Common myeloid progenitor, CD34-positive (primary cell): ENCODE measurements at regions of chrX and their contacts with region 1.

Region 1: GRCh38 chrX:41084893-41085511 is at the start of gene USP9X:
- DNase-seq: peak; percentile 86 to 93 (median 92)
- H3K4me3 ChIP-seq: peak within 1 kb of the TSS; percentile 78 to 94 (median 89)
- H3K27ac ChIP-seq: peak within 1 kb of the TSS; percentile 98 to 99
- H3K4me1 ChIP-seq: peaks cover 12 to 36% (median 27%) of the 10 kb centered on the region in 4 experiments
- H3K27me3 ChIP-seq: peaks cover 0 to 30% (median 0%) of the 10 kb centered on the region in 5 experiments

Region 2: GRCh38 chrX:40646489-40647306 is 438.3 kb before region 1 on chrX:
- CTCF ChIA-PET with region 1: no interaction called
- POLR2A ChIA-PET with region 1: interaction called, 12 read pairs
- DNase-seq: peak in 2 of 3 donors; percentile 40 to 59
- H3K4me3 ChIP-seq: peak overlapping the region; percentile 52 to 88 (median 76)
- H3K27ac ChIP-seq: peak overlapping the region; percentile 30 to 66
- H3K4me1 ChIP-seq: peaks cover 0 to 40% (median 33%) of the 10 kb centered on the region in 4 experiments
- H3K27me3 ChIP-seq: peaks cover 0 to 12% (median 0%) of the 10 kb centered on the region in 5 experiments

Region 3: GRCh38 chrX:41003506-41004270 is 81.3 kb before region 1 on chrX:
- CTCF ChIA-PET with region 1: no interaction called
- POLR2A ChIA-PET with region 1: no interaction called
- DNase-seq: no peak
- H3K4me3 ChIP-seq: no peak overlapping the region
- H3K27ac ChIP-seq: no peak overlapping the region
- H3K4me1 ChIP-seq: peaks cover 0 to 5% (median 2%) of the 10 kb centered on the region in 4 experiments
- H3K27me3 ChIP-seq: peaks cover 0 to 5% (median 0%) of the 10 kb centered on the region in 5 experiments

Region 4: DNA sequence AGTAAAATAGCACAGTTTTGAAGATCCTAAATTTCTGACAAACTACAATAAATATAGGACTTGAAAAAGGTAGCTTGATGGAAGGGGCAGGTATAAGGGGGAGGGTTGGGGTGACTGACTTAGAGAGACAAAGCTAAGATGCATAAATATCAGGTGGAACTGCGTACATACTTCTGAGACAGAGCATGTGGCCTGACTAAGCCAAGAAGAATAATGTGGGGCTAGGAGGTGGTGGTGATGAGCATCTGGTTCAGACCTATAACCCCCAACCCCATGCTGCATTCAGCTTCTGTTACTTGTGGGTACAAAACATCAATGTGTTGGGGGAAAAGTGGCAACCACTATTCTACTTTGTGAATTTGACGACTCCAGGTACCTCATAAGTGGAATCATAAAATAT is 20.0 kb after region 1 on chrX:
- CTCF ChIA-PET with region 1: interaction called, 3 read pairs
- POLR2A ChIA-PET with region 1: interaction called, 12 read pairs
- DNase-seq: no peak
- H3K4me3 ChIP-seq: no peak overlapping the region
- H3K27ac ChIP-seq: no peak overlapping the region
- H3K4me1 ChIP-seq: peaks cover 0 to 5% (median 0%) of the 10 kb centered on the region in 4 experiments
- H3K27me3 ChIP-seq: peaks cover 0 to 9% (median 0%) of the 10 kb centered on the region in 5 experiments